ENCODE measurements at regions of chr12 and their contacts with region 1.

Region 1: GRCh38 chr12:93502802-93503623 is 35.7 kb downstream of the MRPL42 start:
- DNase-seq: no peak
- H3K4me3 ChIP-seq: no peak overlapping the region
- H3K27ac ChIP-seq: no peak overlapping the region
- H3K27me3 ChIP-seq: no peaks in the 10 kb centered on the region
- CTCF ChIP-seq: peak; percentile 85

Region 2: GRCh38 chr12:93127582-93128331 is 375.3 kb before region 1 on chr12:
- CTCF ChIA-PET with region 1: no interaction called
- POLR2A ChIA-PET with region 1: no interaction called
- DNase-seq: peak; percentile 88
- H3K4me3 ChIP-seq: no peak overlapping the region
- H3K27ac ChIP-seq: peak overlapping the region; percentile 24
- H3K27me3 ChIP-seq: no peaks in the 10 kb centered on the region
- CTCF ChIP-seq: peak; percentile 62

Region 3: DNA sequence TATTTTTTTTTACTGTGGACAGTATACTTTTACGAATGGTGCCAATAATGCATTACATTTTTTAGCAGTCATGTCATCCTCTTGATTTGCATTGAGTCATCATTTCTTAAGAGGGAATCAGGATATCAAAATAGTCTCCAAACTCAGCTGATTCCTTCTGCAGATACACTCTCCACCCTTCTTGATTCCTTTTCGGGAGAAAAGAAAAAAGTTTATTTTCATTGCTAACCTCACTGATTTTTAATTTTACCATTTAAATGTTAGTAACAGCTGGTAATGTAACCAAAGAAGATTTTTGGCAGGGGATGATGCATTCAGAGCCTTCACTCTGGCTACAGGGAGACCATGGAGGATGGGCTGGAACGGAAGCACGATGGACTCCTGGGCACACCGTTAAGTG is 11.8 kb after region 1 on chr12:
- CTCF ChIA-PET with region 1: interaction called, 81 read pairs
- POLR2A ChIA-PET with region 1: no interaction called
- DNase-seq: peak; percentile 41
- H3K4me3 ChIP-seq: no peak overlapping the region
- H3K27ac ChIP-seq: no peak overlapping the region
- H3K27me3 ChIP-seq: no peaks in the 10 kb centered on the region
- CTCF ChIP-seq: no peak

Region 4: DNA sequence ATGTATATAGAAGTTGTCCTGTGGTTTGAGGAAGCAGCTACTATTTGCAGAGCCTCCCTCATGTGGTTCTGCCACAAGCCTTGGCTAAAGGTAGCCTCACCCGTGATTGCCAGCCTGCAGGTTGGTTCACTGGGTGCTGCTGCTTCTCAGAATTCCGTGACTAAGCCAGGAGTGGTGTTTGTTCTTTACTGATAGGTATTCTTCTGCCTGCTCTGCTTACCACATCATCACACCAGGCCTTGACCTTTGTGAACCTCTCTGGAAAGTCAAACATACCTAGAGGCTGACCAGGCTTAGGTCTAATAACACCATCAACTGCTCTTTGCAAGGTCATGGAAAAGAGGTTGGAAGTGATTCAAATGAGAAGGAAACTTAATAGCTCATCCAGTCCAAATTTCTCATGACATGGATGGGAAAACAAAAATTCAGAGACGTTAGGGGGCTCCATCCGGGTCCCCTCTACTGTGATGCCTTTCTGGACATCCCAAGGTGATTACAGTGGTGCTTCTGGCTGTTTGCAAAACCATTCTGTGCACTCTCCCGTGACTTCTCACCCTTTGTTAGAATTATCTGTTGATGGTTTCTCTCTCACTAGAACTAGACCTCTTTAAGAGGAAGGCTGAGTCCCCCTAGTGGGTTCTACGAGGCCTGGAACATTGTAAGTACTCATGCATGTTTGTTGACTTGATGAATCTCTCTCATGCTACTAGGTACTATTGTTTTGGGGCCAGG is 61.0 kb after region 1 on chr12:
- CTCF ChIA-PET with region 1: interaction called, 45 read pairs
- POLR2A ChIA-PET with region 1: no interaction called
- DNase-seq: no peak
- H3K4me3 ChIP-seq: no peak overlapping the region
- H3K27ac ChIP-seq: no peak overlapping the region
- H3K27me3 ChIP-seq: no peaks in the 10 kb centered on the region
- CTCF ChIP-seq: peak; percentile 55

Region 5: GRCh38 chr12:93624595-93625294 is 121.7 kb after region 1 on chr12:
- CTCF ChIA-PET with region 1: no interaction called
- POLR2A ChIA-PET with region 1: no interaction called
- DNase-seq: peak; percentile 83
- H3K4me3 ChIP-seq: no peak overlapping the region
- H3K27ac ChIP-seq: peak overlapping the region; percentile 93
- H3K27me3 ChIP-seq: no peaks in the 10 kb centered on the region
- CTCF ChIP-seq: no peak

Region 6: GRCh38 chr12:93742110-93742934 is 239.3 kb after region 1 on chr12:
- CTCF ChIA-PET with region 1: interaction called, 14 read pairs
- POLR2A ChIA-PET with region 1: no interaction called
- DNase-seq: peak; percentile 10
- H3K4me3 ChIP-seq: peak overlapping the region; percentile 69
- H3K27ac ChIP-seq: peak overlapping the region; percentile 70
- H3K27me3 ChIP-seq: no peaks in the 10 kb centered on the region
- CTCF ChIP-seq: peak; percentile 51

Region 7: DNA sequence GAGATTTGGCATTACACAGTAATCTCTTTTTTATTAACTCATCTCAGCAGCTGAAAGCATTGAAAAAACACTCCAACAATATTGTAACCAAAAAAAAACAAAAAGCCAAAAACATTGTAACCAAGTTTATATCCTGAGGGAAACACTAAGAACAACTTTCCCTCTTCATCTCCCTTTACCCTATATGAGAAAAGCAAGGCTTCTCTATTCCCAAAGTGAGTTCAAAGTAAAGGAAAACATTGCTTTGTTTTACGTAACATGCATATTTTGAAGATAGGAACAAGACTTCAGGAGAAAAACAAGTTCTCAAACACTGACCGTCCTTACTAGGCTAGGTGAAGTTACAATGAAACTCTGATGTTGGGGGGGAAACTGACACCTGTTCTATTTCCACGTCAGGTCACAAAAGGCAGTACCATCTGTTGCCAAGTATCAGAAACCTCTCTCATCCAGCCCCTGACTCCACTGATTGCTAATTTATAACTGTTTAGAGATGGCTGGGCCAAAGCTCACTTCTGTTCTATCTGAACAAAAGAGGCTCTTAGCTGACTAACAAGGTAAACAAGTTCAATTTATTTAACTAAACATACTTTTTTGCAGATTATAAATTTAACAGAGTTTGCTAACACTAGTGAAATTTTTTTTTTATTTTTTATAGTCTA is 577.5 kb after region 1 on chr12:
- CTCF ChIA-PET with region 1: interaction called, 23 read pairs
- POLR2A ChIA-PET with region 1: no interaction called
- DNase-seq: no peak
- H3K4me3 ChIP-seq: no peak overlapping the region
- H3K27ac ChIP-seq: no peak overlapping the region
- H3K27me3 ChIP-seq: no peaks in the 10 kb centered on the region
- CTCF ChIP-seq: no peak

Measured in AG04450 (cell line).